Sciatic nerve (tissue), 2 donors: ENCODE measurements at regions of chr7 and their contacts with region 1.

Region 1: DNA sequence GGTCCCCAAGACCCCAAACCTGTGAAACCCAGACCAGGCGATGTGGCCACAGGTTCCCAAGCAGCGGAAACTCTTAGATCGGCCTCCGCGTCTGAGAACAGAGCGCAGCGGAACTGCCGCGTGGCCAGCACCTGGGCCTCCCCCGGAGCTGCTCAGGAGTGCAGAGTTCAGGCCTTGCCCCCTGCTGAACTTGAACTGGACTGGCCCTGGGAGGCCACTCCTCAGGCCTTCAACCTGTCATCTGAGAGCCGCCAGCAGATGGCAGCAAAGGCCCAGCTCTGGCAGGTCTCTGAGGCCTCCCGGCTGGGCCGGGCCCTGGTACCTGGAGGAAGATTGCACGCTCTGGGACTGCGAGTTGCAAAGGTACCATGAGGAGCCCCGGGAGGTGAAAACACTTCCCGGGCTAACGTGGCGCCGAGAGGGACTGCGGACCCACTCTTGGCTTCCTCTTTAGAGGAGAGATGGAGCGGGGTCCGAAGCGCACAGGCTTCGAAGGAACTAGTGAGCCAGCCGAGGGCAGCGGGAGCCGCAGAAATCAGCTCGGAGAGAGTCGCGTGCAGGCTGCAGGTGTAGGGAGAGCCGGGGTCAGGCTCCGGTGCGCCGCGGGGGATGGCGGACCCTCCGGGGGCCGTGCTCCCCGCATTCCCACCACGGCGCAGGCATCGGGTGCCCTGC is 89.1 kb downstream of the PAXIP1 start:
- DNase-seq: peak; percentile 94
- ATAC-seq: peak; percentile 92

Region 2: DNA sequence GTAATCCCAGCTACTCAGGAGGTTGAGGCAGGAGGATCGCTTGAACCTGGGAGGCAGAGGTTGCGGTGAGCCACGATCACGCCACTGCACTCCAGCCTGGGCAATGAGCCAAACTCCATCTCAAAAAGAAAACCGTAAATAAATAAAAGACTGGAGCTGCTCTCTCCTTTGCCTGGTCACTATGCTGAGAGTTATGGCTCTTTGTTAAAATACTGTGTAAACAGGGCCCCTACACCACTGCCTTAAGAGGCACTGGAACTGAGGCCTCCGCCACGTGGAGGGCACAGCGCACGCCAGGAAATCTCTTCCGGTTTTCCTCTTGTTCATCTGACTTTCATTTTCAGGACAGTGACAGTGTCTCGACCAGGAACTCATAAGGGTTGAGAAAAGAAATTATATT is 34.1 kb before region 1 on chr7:
- intact Hi-C with region 1: no loop called
- DNase-seq: no peak
- ATAC-seq: no peak

Region 3: DNA sequence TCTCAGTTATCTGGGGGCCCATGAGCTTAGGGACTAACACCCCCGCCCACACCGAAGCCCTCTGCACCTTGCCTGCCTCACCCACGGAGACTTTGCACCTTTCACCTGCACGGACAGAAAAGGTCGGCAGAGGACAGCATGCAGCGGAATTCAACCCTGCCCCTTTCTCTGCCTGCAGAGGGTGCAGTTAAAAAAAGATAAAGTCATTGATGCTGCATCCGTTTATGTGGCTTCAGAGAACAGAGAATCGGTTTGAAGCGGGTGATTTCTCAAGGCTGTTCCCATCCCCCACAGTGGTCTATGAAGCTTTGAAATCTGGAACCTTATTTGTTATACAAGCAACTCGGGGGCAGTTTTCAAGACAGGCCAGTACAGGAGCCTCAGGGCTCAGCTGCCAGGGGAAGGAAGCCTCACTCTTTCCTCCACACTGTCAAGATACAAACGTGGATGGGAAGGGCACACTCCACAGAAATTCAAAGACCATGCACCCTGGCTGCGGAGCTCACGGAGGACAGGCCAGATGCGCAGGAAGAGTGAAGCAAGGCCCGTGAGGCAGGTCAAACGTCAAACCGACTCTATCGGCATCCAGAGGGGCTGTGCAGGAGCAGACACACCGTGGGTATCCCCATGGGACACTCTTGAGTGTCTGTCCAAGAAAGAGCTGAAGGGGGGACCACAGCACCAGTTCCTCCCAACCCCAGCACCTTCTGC is 450.2 kb after region 1 on chr7:
- intact Hi-C with region 1: loop called (anchors 10 kb)
- DNase-seq: no peak
- ATAC-seq: no peak